ENCODE measurements at regions of chr2 and their contacts with region 1.

Region 1: DNA sequence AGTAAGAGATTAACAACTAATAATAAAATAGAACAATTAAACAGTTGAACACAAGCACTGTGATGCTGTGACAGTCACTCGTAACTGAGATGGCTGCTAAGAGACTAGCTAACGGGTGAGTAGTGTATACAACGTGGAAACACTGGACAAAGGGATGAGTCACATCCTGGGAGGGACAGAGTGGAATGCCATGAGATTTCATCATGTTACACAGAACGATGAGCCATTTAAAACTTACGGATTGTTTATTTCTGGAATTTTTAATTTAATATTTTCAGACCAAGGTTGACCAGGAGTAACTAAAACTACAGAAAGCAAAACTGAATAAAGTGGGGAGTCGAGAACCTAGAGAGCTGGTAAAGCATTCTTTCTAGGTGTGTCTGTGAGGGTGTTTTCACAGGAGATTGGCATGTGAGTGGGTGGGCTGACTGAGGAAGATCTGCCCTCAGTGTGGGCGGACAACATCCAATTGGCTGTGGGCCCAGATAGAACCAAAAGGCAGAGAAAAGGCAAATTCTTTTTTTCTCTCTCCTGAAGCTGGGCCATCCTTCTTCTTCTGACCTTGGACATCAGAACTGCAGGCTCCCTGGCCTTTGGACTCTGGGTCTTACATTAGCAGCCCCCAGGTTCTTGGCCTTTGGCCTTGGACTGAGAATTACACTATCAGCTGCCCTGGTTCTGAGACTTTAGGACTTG is 14.6 kb downstream of the TMSB10 start:
- DNase-seq: peak in 1 of 2 donors; percentile 79
- H3K4me3 ChIP-seq: peak overlapping the region in 2 of 3 donors; percentile 15 to 47
- H3K27ac ChIP-seq: peak overlapping the region; percentile 95 to 96
- H3K4me1 ChIP-seq: peaks cover 0 to 7% of the 10 kb centered on the region in 2 donors
- H3K27me3 ChIP-seq: no peaks in the 10 kb centered on the region
- CTCF ChIP-seq: no peak
- POLR2A ChIP-seq: peak; percentile 12

Region 2: DNA sequence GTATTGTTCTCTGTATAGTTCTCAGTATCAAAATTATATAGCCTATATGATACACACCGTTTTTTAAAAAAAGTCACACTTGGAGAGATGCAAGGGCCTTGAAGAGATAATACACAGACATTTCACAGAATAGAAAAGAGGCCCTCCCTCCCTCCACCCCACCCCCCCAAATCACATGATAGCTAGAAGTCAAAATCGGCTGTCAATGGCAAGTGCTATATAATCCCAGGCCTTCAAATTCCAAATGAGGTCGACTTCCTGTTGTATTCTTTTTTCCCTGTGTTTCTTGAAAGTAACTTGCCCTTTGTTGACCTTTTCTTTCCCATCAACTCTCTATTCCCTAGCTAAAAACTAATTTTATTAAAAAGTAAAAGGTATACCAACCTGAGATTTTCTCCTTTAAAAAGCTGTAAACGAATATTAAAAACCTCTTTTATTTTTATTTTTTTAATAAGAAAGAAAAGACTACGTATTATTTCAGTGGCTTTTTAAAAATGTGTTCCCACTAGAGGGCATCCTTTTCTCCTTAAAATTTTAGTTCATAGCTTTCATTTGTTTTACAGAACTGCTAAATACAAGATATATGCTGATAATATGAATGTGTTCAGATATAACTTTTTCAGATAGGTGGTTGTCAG is 97.5 kb after region 1 on chr2:
- intact Hi-C with region 1: no loop called
- DNase-seq: no peak
- H3K4me3 ChIP-seq: no peak overlapping the region
- H3K27ac ChIP-seq: no peak overlapping the region
- H3K4me1 ChIP-seq: no peaks in the 10 kb centered on the region
- H3K27me3 ChIP-seq: no peaks in the 10 kb centered on the region
- CTCF ChIP-seq: no peak
- POLR2A ChIP-seq: no peak

Region 3: GRCh38 chr2:85209887-85210286 is 289.9 kb after region 1 on chr2:
- intact Hi-C with region 1: loop called (anchors 5 kb)
- DNase-seq: no peak
- H3K4me3 ChIP-seq: no peak overlapping the region
- H3K27ac ChIP-seq: no peak overlapping the region
- H3K4me1 ChIP-seq: peaks cover 0 to 1% of the 10 kb centered on the region in 2 donors
- H3K27me3 ChIP-seq: no peaks in the 10 kb centered on the region
- CTCF ChIP-seq: no peak
- POLR2A ChIP-seq: no peak

Region 4: DNA sequence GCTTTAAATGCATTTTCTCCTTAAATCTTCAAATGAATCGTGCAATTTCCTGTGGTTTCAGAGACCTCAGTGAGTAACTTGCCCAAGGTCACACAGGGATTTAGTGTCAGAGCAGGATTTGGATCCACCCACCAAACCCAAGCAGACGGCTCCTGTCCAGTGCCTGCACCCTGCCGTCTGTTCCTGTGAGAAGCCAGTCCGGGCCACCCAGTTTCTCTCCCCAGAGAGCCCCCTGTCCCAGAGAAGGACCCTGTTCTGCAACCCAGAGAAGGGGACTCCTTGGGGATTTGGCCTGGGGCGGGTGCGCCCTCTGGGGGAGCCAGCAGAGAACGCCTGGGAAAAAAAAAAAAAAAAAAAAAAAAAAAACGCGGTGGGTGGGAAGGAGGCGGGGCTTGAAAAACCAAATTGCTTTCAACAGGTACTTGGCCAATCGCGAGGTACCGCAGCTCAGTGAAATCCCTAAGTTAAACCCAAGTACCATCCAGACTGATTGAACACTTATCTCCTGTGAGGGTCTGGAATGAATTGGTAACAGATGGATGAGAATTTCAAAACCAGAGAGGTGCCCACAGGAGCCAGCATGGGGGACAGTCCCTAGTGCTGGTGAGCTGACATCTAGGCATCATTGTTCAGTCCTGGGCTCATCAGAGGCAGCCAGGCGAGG is 1448.3 kb after region 1 on chr2:
- intact Hi-C with region 1: no loop called
- DNase-seq: no peak
- H3K4me3 ChIP-seq: peak overlapping the region in 1 of 3 donors; percentile 38
- H3K27ac ChIP-seq: no peak overlapping the region
- H3K4me1 ChIP-seq: no peaks in the 10 kb centered on the region
- H3K27me3 ChIP-seq: no peaks in the 10 kb centered on the region
- CTCF ChIP-seq: peak in 2 of 3 donors; percentile 9 to 22
- POLR2A ChIP-seq: no peak